ENCODE measurements at regions of chr12 and their contacts with region 1.

Region 1: GRCh38 chr12:49331380-49332222 is 5.4 kb downstream of the C1QL4 start:
- DNase-seq: peak; percentile 46
- H3K4me3 Mint-ChIP-seq: no peak overlapping the region
- H3K27ac Mint-ChIP-seq: no peak overlapping the region
- H3K4me1 Mint-ChIP-seq: no peaks in the 10 kb centered on the region
- H3K27me3 Mint-ChIP-seq: no peaks in the 10 kb centered on the region
- CTCF ChIP-seq: peak; percentile 27

Region 2: DNA sequence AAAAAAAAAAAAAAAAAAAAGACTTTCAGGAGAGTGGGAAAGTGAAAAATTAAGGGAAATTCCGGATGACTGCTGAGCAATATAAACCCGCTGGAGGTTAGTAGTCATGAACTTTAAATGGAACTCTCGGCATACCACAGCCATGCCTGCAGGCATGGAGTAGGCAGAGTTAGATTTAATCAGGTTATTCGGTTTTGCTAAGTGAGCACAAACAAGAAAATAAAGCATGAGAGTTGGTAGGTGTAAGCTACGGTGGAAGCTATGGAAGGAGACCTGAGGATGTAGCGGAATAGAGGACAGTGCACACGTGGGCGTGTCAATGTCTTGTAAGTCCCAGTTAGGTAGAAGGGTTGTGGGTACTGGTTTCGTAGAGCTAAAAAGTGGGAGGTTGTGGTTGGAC is 78.5 kb before region 1 on chr12:
- CTCF ChIA-PET with region 1: no interaction called
- intact Hi-C with region 1: no loop called
- DNase-seq: no peak
- H3K4me3 Mint-ChIP-seq: no peak overlapping the region
- H3K27ac Mint-ChIP-seq: no peak overlapping the region
- H3K4me1 Mint-ChIP-seq: no peaks in the 10 kb centered on the region
- H3K27me3 Mint-ChIP-seq: no peaks in the 10 kb centered on the region
- CTCF ChIP-seq: no peak

Region 3: DNA sequence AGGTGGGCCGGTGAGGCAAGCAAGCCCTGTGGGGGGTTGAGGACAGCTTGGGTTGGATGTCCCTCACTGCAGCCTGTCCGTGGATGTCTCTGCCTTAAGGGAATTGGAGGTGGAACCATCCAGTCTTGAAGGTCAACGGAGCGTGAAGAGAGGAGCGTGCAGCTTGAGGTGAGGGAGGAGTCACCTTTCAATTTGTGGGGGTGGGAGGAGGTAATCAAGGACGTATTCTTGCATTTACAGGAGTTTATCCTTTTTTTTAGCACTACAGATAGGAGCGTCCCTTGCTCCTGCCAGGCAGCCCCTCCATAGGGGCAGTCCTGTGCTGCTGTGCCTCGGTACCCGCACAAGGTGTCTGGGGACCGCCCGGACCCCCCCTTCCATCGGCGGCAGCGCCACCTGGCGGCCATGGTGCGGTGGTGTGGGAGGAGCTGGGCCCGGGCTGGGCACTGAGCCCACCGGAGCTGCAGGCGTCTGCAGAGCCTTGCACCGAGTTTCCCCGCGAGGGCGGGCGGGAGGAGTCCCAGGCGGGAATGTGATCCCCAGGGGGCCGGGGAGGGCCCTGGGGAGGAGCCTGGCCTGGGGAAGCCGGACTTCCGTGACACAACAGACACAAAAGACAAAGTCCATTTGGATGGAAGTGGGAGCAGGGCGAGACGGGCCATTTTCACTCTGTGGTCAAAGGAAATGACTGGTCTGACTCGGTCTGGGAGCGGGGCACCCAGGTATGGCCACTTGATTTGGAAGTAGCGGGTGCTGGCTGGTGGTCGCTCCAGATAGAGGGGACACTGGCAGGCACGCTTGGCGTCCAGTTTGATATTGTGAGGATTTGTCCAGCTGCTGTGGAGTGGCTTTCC is 16.0 kb after region 1 on chr12:
- CTCF ChIA-PET with region 1: interaction called, 17 read pairs
- intact Hi-C with region 1: no loop called
- DNase-seq: peak; percentile 89
- H3K4me3 Mint-ChIP-seq: peak overlapping the region; percentile 72
- H3K27ac Mint-ChIP-seq: peak overlapping the region; percentile 69
- H3K4me1 Mint-ChIP-seq: peaks cover 24% of the 10 kb centered on the region
- H3K27me3 Mint-ChIP-seq: peaks cover 43% of the 10 kb centered on the region
- CTCF ChIP-seq: peak; percentile 86

Region 4: DNA sequence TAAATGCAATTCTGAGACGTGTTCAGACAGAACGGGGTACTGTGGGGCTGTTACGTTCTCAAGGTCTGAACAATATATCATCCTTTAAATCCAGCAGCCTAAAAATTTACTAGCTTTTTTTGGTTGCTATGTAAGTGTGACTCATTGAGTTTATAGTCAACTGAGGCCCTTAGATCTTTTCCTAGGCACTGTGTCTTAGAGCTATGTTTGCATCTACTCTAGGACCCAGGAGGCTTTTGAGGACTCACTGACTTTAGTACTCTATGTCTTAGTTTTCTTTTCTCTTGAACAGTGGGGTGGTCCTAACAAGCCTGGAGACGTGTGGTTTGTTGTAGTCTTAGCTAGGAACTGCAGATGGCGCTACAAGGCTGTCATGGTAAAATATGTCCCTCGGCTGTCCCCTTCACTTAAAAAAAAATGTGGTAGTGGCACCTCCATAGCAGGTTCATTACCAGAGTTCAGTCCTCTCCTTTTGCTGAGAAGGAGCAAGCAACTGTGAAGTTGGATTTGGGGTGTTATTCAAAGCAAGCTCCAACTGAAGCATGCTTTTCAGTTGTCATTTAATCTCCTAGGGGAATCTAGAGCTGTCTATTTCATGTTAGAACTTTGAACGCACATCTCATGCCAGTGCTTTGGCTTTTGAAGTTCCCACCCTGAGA is 27.0 kb after region 1 on chr12:
- CTCF ChIA-PET with region 1: interaction called, 19 read pairs
- intact Hi-C with region 1: no loop called
- DNase-seq: peak; percentile 45
- H3K4me3 Mint-ChIP-seq: no peak overlapping the region
- H3K27ac Mint-ChIP-seq: no peak overlapping the region
- H3K4me1 Mint-ChIP-seq: peaks cover 22% of the 10 kb centered on the region
- H3K27me3 Mint-ChIP-seq: no peaks in the 10 kb centered on the region
- CTCF ChIP-seq: peak; percentile 64

Region 5: GRCh38 chr12:49515266-49515665 is 183.7 kb after region 1 on chr12:
- CTCF ChIA-PET with region 1: interaction called, 13 read pairs
- intact Hi-C with region 1: no loop called
- DNase-seq: peak; percentile 42
- H3K4me3 Mint-ChIP-seq: peak overlapping the region; percentile 41
- H3K27ac Mint-ChIP-seq: no peak overlapping the region
- H3K4me1 Mint-ChIP-seq: peaks cover 21% of the 10 kb centered on the region
- H3K27me3 Mint-ChIP-seq: no peaks in the 10 kb centered on the region
- CTCF ChIP-seq: no peak

Region 6: DNA sequence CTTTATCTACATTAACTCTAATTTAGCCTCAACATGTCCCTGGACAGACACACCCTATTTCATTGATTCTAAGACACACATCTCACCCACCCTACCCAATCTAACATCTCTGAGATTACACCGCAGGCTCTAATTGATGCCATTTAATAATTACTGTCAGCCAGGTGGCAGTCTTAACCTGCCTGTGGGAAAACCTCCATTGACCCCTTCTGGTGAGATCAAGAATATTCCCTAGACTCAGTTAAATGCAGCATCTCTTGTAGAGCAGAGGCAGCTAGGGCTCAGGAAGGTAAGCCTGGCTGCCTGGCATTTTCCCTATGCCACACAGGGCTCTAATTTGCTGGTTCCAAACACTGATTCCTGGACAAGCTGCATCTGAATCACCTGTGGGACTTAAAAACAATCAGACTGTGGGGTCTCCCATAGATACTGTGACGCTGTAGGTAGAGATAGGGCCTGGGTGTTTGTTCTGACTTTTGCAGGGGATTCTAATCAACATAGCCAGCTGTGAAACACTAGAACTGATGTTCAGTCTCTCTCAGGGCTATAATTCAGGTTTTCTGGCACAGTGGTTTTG is 222.0 kb after region 1 on chr12:
- CTCF ChIA-PET with region 1: interaction called, 11 read pairs
- intact Hi-C with region 1: no loop called
- DNase-seq: peak; percentile 25
- H3K4me3 Mint-ChIP-seq: no peak overlapping the region
- H3K27ac Mint-ChIP-seq: no peak overlapping the region
- H3K4me1 Mint-ChIP-seq: no peaks in the 10 kb centered on the region
- H3K27me3 Mint-ChIP-seq: peaks cover 26% of the 10 kb centered on the region
- CTCF ChIP-seq: peak; percentile 60